Natural killer cell (primary cell): ENCODE measurements at regions of chr2 and their contacts with region 1.

Region 1: DNA sequence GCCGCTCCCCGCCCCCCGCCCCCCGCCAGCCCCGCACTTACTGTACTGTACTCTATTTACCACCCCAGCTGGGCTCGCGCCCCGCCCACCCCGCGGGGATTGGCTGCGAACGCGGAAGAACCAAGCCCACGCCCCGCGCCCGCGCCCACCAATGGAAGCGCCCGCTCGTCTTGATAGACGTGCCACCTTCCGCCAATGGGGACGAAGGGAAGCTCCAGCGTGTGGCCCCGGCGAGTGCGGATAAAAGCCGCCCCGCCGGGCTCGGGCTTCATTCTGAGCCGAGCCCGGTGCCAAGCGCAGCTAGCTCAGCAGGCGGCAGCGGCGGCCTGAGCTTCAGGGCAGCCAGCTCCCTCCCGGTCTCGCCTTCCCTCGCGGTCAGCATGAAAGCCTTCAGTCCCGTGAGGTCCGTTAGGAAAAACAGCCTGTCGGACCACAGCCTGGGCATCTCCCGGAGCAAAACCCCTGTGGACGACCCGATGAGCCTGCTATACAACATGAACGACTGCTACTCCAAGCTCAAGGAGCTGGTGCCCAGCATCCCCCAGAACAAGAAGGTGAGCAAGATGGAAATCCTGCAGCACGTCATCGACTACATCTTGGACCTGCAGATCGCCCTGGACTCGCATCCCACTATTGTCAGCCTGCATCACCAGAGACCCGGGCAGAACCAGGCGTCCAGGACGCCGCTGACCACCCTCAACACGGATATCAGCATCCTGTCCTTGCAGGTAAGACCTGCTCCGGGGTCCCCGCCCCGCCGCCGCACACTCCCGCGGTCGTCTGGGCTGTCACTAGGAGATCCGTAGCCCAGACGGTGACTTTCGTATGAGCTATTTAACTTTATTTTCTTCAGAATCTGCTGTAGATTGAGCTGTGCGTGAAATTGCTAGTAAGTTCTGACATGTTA is at the start of gene ID2:
- DNase-seq: peak; percentile 99 to 100
- ATAC-seq: peak; percentile 75 to 88 (median 77)
- H3K4me3 ChIP-seq: peak within 1 kb of the TSS; percentile 80
- H3K4me3 Mint-ChIP-seq: peak within 1 kb of the TSS; percentile 99
- H3K27ac ChIP-seq: peak within 1 kb of the TSS; percentile 48
- H3K27ac Mint-ChIP-seq: peak within 1 kb of the TSS; percentile 97 to 98
- H3K4me1 ChIP-seq: peaks cover 37% of the 10 kb centered on the region
- H3K4me1 Mint-ChIP-seq: peaks cover 59 to 69% of the 10 kb centered on the region in 2 donors
- H3K27me3 ChIP-seq: peaks cover 6% of the 10 kb centered on the region
- H3K27me3 Mint-ChIP-seq: peaks cover 0 to 8% of the 10 kb centered on the region in 2 donors
- CTCF ChIP-seq: no peak
- total RNA-seq, gene ID2: 185 to 209 (median 191) TPM

Region 2: GRCh38 chr2:7427293-7428060 is 1254.6 kb before region 1 on chr2:
- intact Hi-C with region 1: loop called (anchors 1 kb)
- DNase-seq: peak in 1 of 2 donors; percentile 84
- ATAC-seq: peak; percentile 50 to 66 (median 54)
- H3K4me3 ChIP-seq: no peak overlapping the region
- H3K4me3 Mint-ChIP-seq: no peak overlapping the region
- H3K27ac ChIP-seq: no peak overlapping the region
- H3K27ac Mint-ChIP-seq: peak overlapping the region in 1 of 2 donors; percentile 29
- H3K4me1 ChIP-seq: peaks cover 40% of the 10 kb centered on the region
- H3K4me1 Mint-ChIP-seq: peaks cover 50 to 52% of the 10 kb centered on the region in 2 donors
- H3K27me3 ChIP-seq: no peaks in the 10 kb centered on the region
- H3K27me3 Mint-ChIP-seq: no peaks in the 10 kb centered on the region
- CTCF ChIP-seq: peak; percentile 90

Region 3: GRCh38 chr2:8004250-8004681 is 677.8 kb before region 1 on chr2:
- intact Hi-C with region 1: loop called (anchors 10 kb)
- DNase-seq: no peak
- ATAC-seq: peak; percentile 36 to 59 (median 58)
- H3K4me3 ChIP-seq: no peak overlapping the region
- H3K4me3 Mint-ChIP-seq: no peak overlapping the region
- H3K27ac ChIP-seq: no peak overlapping the region
- H3K27ac Mint-ChIP-seq: peak overlapping the region in 1 of 2 donors; percentile 70
- H3K4me1 ChIP-seq: no peaks in the 10 kb centered on the region
- H3K4me1 Mint-ChIP-seq: peaks cover 13 to 30% of the 10 kb centered on the region in 2 donors
- H3K27me3 ChIP-seq: no peaks in the 10 kb centered on the region
- H3K27me3 Mint-ChIP-seq: no peaks in the 10 kb centered on the region
- CTCF ChIP-seq: no peak

Region 4: GRCh38 chr2:8456151-8456845 is 225.7 kb before region 1 on chr2:
- intact Hi-C with region 1: loop called (anchors 5 kb)
- DNase-seq: peak; percentile 44 to 80
- ATAC-seq: peak; percentile 46 to 64 (median 51)
- H3K4me3 ChIP-seq: peak overlapping the region; percentile 19
- H3K4me3 Mint-ChIP-seq: peak overlapping the region; percentile 95
- H3K27ac ChIP-seq: peak overlapping the region; percentile 99
- H3K27ac Mint-ChIP-seq: peak overlapping the region; percentile 99 to 100
- H3K4me1 ChIP-seq: peaks cover 80% of the 10 kb centered on the region
- H3K4me1 Mint-ChIP-seq: peaks cover 80 to 85% of the 10 kb centered on the region in 2 donors
- H3K27me3 ChIP-seq: no peaks in the 10 kb centered on the region
- H3K27me3 Mint-ChIP-seq: no peaks in the 10 kb centered on the region
- CTCF ChIP-seq: no peak

Region 5: GRCh38 chr2:8525582-8526402 is 156.2 kb before region 1 on chr2:
- intact Hi-C with region 1: loop called (anchors 5 kb)
- DNase-seq: peak in 1 of 2 donors; percentile 32
- ATAC-seq: peak; percentile 56 to 77 (median 76)
- H3K4me3 ChIP-seq: no peak overlapping the region
- H3K4me3 Mint-ChIP-seq: peak overlapping the region; percentile 59
- H3K27ac ChIP-seq: peak overlapping the region; percentile 65
- H3K27ac Mint-ChIP-seq: peak overlapping the region; percentile 54 to 91
- H3K4me1 ChIP-seq: peaks cover 67% of the 10 kb centered on the region
- H3K4me1 Mint-ChIP-seq: peaks cover 67 to 76% of the 10 kb centered on the region in 2 donors
- H3K27me3 ChIP-seq: no peaks in the 10 kb centered on the region
- H3K27me3 Mint-ChIP-seq: no peaks in the 10 kb centered on the region
- CTCF ChIP-seq: no peak

Region 6: DNA sequence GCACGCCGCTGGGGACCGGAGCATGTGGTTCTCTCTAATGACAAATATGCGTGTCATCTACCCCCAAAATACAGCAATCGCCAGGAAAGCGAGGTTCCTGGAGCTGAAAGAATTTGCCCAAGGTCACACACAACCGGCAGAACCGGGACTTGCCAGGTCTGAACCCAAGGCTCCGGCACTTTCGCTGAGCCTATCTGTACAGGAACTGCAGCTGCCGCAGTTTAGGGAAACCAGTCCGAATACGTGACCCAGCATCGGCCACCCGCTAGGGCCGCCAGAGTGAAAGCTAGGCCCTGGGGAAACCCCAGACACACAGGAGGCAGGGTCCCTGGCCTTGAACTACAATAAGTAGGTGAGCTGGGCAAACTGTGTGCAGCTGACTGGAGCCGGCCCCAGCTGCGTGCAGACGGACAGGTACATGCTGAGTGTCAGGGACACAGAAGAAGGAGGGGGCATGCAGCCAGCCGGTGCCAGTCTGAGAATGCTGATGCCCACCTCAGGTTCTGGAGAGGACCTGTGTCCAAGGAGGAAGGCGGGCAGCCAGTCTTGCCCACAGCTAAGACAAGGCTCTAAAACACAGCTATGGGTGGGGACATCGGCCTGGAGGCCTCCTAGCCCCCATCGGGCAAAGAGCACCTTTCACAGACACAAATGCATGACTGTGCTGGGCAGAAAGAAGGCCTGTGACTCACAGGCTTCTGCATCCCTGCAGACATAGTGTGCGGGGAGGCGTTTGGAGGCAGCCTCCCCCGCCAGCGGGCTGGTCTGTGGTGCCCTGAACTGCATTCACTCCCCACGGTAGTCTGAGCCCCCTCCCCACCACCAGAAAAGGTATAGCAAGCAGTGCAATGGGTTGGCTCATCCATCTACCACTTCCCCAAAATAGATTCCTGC is 107.6 kb before region 1 on chr2:
- intact Hi-C with region 1: no loop called
- DNase-seq: no peak
- ATAC-seq: peak; percentile 45 to 57 (median 50)
- H3K4me3 ChIP-seq: no peak overlapping the region
- H3K4me3 Mint-ChIP-seq: peak overlapping the region; percentile 81
- H3K27ac ChIP-seq: no peak overlapping the region
- H3K27ac Mint-ChIP-seq: peak overlapping the region in 1 of 2 donors; percentile 66
- H3K4me1 ChIP-seq: peaks cover 35% of the 10 kb centered on the region
- H3K4me1 Mint-ChIP-seq: peaks cover 34 to 42% of the 10 kb centered on the region in 2 donors
- H3K27me3 ChIP-seq: no peaks in the 10 kb centered on the region
- H3K27me3 Mint-ChIP-seq: peaks cover 0 to 6% of the 10 kb centered on the region in 2 donors
- CTCF ChIP-seq: no peak